Aorta (tissue), 5 donors: ENCODE measurements at regions of chr12 and their contacts with region 1.

Region 1: DNA sequence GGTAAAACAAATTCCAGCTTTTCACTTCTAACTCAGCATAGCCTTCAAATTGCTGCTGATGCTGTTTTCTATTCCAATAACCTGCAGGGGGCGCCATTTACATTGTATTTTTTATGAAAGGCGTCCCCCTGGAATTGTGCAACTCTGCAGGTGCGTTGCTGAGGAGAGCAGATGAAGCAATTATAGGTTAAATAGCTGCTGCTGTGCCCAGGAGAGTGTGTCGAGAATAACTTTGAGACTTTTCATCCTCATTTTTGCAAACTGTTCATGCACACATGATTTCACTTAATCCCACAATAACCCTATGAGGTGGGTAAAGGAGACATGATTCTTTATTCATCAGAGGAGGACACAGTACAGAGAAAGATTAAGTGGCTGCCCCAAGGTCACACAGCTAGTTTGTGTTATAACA is 75.7 kb downstream of the MYRFL start:
- DNase-seq: peak; percentile 66 to 79
- ATAC-seq: peak; percentile 67
- H3K4me3 ChIP-seq: no peak overlapping the region
- H3K27ac ChIP-seq: no peak overlapping the region
- H3K4me1 ChIP-seq: peaks cover 0 to 2% of the 10 kb centered on the region in 2 donors
- H3K27me3 ChIP-seq: no peaks in the 10 kb centered on the region

Region 2: DNA sequence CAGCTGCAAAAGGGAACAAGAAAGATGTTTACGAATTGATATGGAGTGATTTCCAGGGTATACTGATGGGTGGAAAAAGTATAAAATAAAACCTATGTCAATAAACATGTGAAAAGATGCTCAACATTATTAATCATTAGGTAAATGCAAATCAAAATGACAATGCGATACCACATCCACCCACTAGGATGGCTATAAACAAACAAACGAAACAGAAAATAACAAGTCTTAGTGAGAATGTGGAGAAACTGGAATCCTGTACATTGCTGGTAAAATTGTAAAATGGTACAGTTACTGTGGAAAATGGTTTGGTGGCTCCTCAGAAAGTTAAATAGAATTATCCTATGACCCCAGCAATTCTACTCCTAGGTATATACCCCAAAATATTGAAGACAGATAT is 192.1 kb before region 1 on chr12:
- intact Hi-C with region 1: no loop called
- DNase-seq: no peak
- ATAC-seq: no peak
- H3K4me3 ChIP-seq: no peak overlapping the region
- H3K27ac ChIP-seq: no peak overlapping the region
- H3K4me1 ChIP-seq: no peaks in the 10 kb centered on the region
- H3K27me3 ChIP-seq: no peaks in the 10 kb centered on the region

Region 3: DNA sequence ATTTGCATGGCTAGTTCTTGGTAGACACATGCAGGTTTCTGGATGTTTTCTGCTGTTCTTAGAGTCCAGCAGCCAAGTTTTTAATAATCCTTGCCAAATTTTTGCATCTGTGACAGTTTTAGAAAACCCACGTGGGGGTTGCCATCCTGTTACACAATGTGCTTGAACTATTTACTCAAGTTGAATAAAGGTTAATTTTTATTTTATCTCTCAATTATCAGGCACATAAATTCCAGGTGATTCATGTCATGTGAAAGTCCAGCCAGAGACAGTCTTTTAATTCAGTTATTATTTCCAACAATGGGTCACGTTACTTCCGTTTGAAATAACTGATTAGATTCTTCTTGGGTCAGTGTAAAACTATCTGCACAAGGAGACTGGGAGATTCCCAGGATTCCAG is 60.0 kb before region 1 on chr12:
- intact Hi-C with region 1: no loop called
- DNase-seq: no peak
- ATAC-seq: no peak
- H3K4me3 ChIP-seq: no peak overlapping the region
- H3K27ac ChIP-seq: no peak overlapping the region
- H3K4me1 ChIP-seq: no peaks in the 10 kb centered on the region
- H3K27me3 ChIP-seq: no peaks in the 10 kb centered on the region

Region 4: GRCh38 chr12:69932676-69933552 is 32.2 kb after region 1 on chr12:
- intact Hi-C with region 1: no loop called
- DNase-seq: no peak
- ATAC-seq: no peak
- H3K4me3 ChIP-seq: no peak overlapping the region
- H3K27ac ChIP-seq: no peak overlapping the region
- H3K4me1 ChIP-seq: no peaks in the 10 kb centered on the region
- H3K27me3 ChIP-seq: no peaks in the 10 kb centered on the region

Region 5: DNA sequence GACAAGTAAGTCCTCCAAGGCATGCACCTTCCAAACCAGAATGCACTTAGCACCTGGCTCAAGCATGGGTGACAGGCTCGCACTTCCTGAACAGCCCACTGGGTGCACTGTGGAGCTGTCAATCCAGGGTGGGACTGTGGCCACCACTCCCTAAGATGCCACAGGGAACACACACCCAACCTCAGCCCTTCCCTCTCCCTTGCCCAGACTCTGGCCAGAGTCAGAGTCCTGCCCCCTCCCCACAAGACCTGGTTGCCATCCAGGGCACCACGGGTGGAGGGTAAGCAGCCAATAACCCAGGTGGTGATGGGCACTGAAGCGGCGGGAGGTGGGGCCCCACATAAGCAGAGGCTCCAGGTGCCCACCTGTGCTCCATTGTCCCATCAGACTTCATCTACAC is 84.9 kb after region 1 on chr12:
- intact Hi-C with region 1: loop called in 1 of 2 experiments (anchors 2 kb)
- DNase-seq: peak in 1 of 2 donors; percentile 57
- ATAC-seq: no peak
- H3K4me3 ChIP-seq: no peak overlapping the region
- H3K27ac ChIP-seq: no peak overlapping the region
- H3K4me1 ChIP-seq: no peaks in the 10 kb centered on the region
- H3K27me3 ChIP-seq: no peaks in the 10 kb centered on the region

Region 6: GRCh38 chr12:70251226-70251625 is 350.5 kb after region 1 on chr12:
- intact Hi-C with region 1: loop called in 1 of 2 experiments (anchors 5 kb)
- DNase-seq: no peak
- ATAC-seq: no peak
- H3K4me3 ChIP-seq: no peak overlapping the region
- H3K27ac ChIP-seq: no peak overlapping the region
- H3K4me1 ChIP-seq: peaks cover 0 to 8% of the 10 kb centered on the region in 2 donors
- H3K27me3 ChIP-seq: no peaks in the 10 kb centered on the region

Region 7: GRCh38 chr12:70365648-70366518 is 465.2 kb after region 1 on chr12 and contains the start of gene KCNMB4:
- intact Hi-C with region 1: loop called (anchors 10 kb)
- DNase-seq: peak; percentile 68 to 88
- ATAC-seq: peak; percentile 89
- H3K4me3 ChIP-seq: peak within 1 kb of the TSS; percentile 92 to 98
- H3K27ac ChIP-seq: no peak within 1 kb of the TSS
- H3K4me1 ChIP-seq: no peaks in the 10 kb centered on the region
- H3K27me3 ChIP-seq: no peaks in the 10 kb centered on the region
- total RNA-seq, gene KCNMB4: 2.0 to 3.3 TPM

Region 8: GRCh38 chr12:70576346-70577282 is 675.9 kb after region 1 on chr12:
- intact Hi-C with region 1: loop called (anchors 5 kb)
- DNase-seq: no peak
- ATAC-seq: peak; percentile 80
- H3K4me3 ChIP-seq: no peak overlapping the region
- H3K27ac ChIP-seq: no peak overlapping the region
- H3K4me1 ChIP-seq: no peaks in the 10 kb centered on the region
- H3K27me3 ChIP-seq: no peaks in the 10 kb centered on the region